ENCODE measurements at regions of chr9 and their contacts with region 1.

Region 1: DNA sequence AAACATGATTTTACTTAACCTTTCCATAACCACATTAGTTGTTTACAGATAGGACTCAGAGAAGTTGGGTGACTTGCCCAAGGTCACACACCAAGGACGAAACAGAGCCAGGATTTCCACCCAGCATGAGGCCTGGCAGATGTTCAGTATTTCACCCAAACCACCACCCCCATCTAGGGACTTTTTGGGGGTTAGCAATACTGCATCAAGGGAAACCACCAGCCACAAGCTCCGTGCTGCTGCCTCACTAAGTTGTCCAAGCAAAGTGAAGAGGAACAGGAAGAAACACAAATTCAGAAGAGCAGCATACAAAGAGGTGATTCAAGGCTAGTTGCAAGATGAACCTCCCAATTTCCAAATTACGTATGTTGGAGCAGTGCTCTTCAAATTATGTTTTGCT is 219.6 kb upstream of the RORB start:
- DNase-seq: no peak

Region 2: DNA sequence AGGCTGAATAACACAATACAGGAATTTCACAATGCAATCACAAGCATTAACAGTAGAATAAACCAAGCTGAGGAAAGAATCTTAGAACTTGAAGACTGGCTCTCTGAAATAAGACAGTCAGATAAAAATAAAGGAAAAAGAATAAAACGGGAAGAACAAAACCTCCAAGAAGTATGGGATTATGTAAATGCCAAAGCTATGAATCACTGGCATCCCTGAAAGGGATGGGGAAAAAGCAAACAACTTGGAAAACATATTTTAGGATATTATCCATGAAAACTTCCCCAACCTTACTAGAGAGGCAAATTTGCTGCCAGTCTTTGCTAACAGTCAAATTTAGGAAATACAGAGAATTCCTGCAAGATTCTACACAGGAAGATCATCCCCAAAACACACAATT is 1482.6 kb before region 1 on chr9:
- intact Hi-C with region 1: loop called in 1 of 2 experiments (anchors 10 kb)
- DNase-seq: no peak

Region 3: DNA sequence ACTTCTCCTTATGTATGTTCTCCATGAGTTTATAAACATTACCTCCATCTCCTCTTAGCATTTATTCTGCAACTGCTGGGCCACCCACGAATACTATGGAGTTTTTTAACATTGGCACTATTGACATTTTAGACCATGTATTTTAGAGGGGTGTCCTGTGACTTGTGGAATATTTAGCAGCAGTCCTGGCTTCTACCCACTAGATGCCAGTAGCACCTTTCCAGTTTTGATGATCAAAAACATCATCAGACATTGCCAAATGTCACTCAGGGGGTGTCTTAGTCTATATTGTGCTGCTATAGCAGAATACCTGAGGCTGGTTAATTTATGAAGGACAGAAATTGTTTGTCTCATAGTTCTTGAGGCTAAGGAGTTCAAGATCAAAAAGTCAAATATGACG is 32.1 kb after region 1 on chr9:
- intact Hi-C with region 1: no loop called
- DNase-seq: no peak

Region 4: GRCh38 chr9:74412236-74412979 is 134.9 kb after region 1 on chr9:
- intact Hi-C with region 1: no loop called
- DNase-seq: no peak